ENCODE measurements at regions of chr13 and their contacts with region 1.

Region 1: DNA sequence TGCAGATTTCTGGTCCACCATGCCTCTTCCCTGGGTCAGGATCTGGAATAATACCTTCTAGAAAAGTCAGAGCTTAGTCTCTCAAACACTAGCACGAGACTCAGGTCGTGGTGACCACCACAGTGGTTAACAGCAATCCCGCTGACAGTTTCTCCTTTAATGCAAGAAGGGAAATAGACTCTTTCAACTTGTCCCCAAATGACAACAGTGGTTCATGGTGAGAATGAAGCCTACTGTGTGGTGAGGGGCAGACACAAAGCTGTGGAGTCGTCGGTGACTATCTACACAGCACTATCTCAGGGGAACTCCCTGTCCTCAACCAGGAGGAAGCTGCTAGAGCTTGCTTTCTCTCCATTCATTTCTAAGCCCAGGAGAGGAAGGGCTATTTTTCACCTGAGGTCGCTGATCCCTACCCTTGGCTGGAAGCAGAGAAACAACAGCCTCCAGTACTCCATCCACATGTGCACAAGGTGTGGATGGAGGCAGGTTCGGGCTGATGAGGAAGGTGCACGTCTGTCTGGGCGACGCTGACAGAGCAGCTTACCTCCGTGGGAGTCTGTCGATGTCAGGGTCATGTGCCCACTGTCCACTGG is 72.4 kb downstream of the STK24 start:
- DNase-seq: peak; percentile 27
- ATAC-seq: peak; percentile 32
- H3K4me3 ChIP-seq: peak overlapping the region in 1 of 5 experiments; percentile 10
- H3K4me3 Mint-ChIP-seq: peak overlapping the region; percentile 76
- H3K27ac ChIP-seq: peak overlapping the region in 1 of 2 donors; percentile 94
- H3K27ac Mint-ChIP-seq: peak overlapping the region; percentile 82
- H3K4me1 ChIP-seq: peaks cover 77 to 84% of the 10 kb centered on the region in 2 donors
- H3K4me1 Mint-ChIP-seq: peaks cover 90% of the 10 kb centered on the region
- H3K27me3 ChIP-seq: no peaks in the 10 kb centered on the region
- H3K27me3 Mint-ChIP-seq: no peaks in the 10 kb centered on the region
- CTCF ChIP-seq: no peak

Region 2: DNA sequence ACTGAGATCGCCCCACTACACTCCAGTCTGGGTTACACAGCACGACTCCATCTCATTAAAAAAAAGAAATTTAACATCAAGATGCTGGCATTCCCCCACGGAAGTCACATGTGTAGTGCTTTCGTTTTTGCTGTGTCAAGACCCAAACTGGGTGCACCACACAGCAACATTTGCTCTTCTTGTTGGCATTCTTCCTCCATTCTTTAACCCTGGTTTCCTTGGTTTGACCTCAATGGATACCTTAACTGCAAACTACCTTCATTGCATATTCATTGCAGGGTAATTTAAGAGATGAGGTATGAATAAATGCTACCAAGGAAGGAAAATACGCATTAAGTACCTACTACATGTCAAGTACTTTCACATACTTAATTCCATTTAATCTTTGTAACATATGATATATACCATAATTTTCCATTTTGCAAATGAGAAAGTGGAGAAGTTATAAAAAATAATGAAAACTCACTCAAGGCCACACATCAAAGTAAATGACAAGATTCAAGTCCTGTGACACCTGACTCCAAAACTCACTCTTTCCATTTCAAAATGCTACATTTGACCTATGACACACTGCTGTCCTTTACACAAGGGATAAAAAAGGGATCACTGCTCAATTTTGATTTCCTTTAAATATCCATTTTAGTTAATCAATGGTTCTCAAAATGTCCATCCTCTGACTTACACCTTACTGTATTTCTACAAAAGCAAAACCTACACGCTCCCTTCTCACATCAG is 13.3 kb after region 1 on chr13:
- CTCF ChIA-PET with region 1: no interaction called
- POLR2A ChIA-PET with region 1: no interaction called
- intact Hi-C with region 1: loop called (anchors 2 kb)
- DNase-seq: peak; percentile 67
- ATAC-seq: peak; percentile 56
- H3K4me3 ChIP-seq: no peak overlapping the region
- H3K4me3 Mint-ChIP-seq: peak overlapping the region; percentile 53
- H3K27ac ChIP-seq: peak overlapping the region; percentile 42 to 69
- H3K27ac Mint-ChIP-seq: peak overlapping the region; percentile 82
- H3K4me1 ChIP-seq: peaks cover 26 to 52% of the 10 kb centered on the region in 2 donors
- H3K4me1 Mint-ChIP-seq: peaks cover 95% of the 10 kb centered on the region
- H3K27me3 ChIP-seq: no peaks in the 10 kb centered on the region
- H3K27me3 Mint-ChIP-seq: no peaks in the 10 kb centered on the region
- CTCF ChIP-seq: no peak

Region 3: DNA sequence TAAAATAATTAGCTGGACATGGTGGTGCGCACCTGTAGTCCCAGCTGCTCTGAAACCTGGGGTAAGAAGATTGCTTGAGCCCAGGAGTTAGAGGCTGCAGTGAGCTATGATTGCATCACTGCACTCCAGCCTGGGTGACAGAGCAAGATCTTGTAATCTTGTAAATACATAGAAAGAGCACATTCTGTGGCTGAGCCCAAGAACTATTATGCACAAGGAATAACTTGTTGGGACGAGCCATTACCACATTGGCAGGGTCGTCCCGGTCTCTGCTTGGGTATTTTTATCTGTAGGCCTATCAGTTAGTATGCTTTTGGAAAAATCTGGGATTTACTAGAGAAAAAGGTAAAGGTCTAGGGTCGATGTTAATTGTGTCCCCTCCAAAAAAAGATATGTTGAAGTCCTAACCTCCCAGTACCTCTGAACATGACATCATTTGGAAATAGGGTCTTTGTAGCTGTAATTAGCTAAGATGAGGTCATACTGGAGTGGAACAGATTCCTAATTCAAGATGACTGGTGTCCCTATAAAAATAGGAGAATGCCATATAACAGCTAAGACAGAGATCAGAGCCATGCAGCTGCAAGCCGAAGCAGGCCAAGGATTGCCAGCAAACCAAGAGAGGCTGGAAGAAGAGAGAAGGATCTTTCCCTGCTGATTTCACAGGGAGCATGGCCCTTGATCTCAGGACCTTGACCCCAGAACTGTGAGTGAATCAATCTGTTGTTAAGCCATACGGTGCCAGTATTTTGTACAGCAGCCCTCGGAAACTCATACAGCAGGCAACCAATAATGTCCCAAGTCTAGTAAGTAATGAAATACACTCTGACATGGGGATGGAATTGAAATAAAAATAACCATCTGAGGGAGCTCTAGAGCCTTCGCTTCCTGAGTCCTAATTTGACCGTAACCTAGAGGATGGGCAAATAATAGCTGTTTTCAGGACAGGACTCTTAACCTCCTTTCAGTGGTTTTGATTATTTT is 1073.8 kb after region 1 on chr13:
- CTCF ChIA-PET with region 1: no interaction called
- POLR2A ChIA-PET with region 1: no interaction called
- intact Hi-C with region 1: no loop called
- DNase-seq: no peak
- ATAC-seq: no peak
- H3K4me3 ChIP-seq: no peak overlapping the region
- H3K4me3 Mint-ChIP-seq: no peak overlapping the region
- H3K27ac ChIP-seq: no peak overlapping the region
- H3K27ac Mint-ChIP-seq: no peak overlapping the region
- H3K4me1 ChIP-seq: no peaks in the 10 kb centered on the region
- H3K4me1 Mint-ChIP-seq: peaks cover 3% of the 10 kb centered on the region
- H3K27me3 ChIP-seq: no peaks in the 10 kb centered on the region
- H3K27me3 Mint-ChIP-seq: no peaks in the 10 kb centered on the region
- CTCF ChIP-seq: no peak

Measured in B cell (primary cell).